CD4-positive, alpha-beta memory T cell (primary cell): ENCODE measurements at regions of chr10 and their contacts with region 1.

Region 1: DNA sequence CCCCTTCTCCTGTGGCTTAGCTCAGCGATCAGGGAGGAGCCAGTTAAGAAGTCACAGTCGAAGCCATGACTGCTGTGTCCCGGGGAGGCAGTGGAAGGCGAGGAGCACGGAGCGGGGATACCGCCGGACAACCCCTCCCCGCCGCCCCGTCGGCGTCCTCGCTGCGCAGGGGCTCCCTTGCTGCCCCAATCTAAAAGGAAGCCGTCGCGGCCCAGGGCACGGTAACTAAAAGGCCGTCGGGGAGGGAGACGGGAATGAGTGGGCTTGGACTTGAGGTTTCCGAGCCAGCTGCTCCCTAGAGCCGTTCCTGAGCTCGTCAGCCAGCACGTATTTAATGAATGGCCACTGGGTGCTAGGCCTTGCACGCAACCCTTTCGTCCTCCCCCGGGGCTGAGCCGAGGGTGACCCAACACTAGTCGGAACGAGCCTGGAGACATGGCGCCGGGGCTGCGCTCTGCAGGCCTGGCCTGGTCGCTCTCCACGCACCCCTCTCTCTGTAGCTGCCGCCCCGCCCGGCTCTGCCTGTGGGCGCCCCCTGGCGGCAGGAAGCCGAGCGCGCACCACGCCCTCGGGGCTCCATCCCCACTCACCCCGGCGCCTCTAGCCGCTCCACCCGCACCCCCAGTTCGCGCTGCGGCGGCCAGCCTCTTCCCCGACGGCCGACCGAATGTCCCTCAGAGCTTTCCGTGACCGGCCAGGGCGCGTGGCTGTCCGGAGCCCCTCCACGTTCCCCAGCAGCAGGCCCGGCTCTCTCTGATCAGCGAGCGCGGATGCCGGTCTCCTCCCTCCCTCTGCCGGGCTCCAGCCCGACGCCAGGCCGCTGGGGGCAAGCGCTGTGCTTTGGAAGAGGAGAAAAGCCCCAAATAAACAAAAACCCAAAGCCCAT is 29.3 kb upstream of the KCNK18 start:
- DNase-seq: peak; percentile 48 to 69 (median 68)
- H3K4me3 ChIP-seq: no peak overlapping the region
- H3K4me3 Mint-ChIP-seq: peak overlapping the region in 6 of 8 donors; percentile 40 to 80 (median 70)
- H3K27ac ChIP-seq: no peak overlapping the region
- H3K27ac Mint-ChIP-seq: peak overlapping the region in 1 of 7 donors; percentile 43
- H3K4me1 ChIP-seq: peaks cover 25% of the 10 kb centered on the region
- H3K4me1 Mint-ChIP-seq: peaks cover 16 to 44% (median 31%) of the 10 kb centered on the region in 4 donors
- H3K27me3 ChIP-seq: peaks cover 64% of the 10 kb centered on the region
- H3K27me3 Mint-ChIP-seq: peaks cover 66 to 68% of the 10 kb centered on the region in 2 donors

Region 2: GRCh38 chr10:116796910-116797513 is 371.0 kb before region 1 on chr10:
- CTCF ChIA-PET with region 1: interaction called, 196 read pairs
- POLR2A ChIA-PET with region 1: no interaction called
- intact Hi-C with region 1: no loop called
- DNase-seq: peak; percentile 52 to 59 (median 54)
- H3K4me3 ChIP-seq: no peak overlapping the region
- H3K4me3 Mint-ChIP-seq: no peak overlapping the region
- H3K27ac ChIP-seq: no peak overlapping the region
- H3K27ac Mint-ChIP-seq: peak overlapping the region in 1 of 7 donors; percentile 79
- H3K4me1 ChIP-seq: no peaks in the 10 kb centered on the region
- H3K4me1 Mint-ChIP-seq: no peaks in the 10 kb centered on the region
- H3K27me3 ChIP-seq: no peaks in the 10 kb centered on the region
- H3K27me3 Mint-ChIP-seq: peaks cover 10 to 21% of the 10 kb centered on the region in 2 donors